ENCODE measurements at regions of chr12 and their contacts with region 1.

Region 1: DNA sequence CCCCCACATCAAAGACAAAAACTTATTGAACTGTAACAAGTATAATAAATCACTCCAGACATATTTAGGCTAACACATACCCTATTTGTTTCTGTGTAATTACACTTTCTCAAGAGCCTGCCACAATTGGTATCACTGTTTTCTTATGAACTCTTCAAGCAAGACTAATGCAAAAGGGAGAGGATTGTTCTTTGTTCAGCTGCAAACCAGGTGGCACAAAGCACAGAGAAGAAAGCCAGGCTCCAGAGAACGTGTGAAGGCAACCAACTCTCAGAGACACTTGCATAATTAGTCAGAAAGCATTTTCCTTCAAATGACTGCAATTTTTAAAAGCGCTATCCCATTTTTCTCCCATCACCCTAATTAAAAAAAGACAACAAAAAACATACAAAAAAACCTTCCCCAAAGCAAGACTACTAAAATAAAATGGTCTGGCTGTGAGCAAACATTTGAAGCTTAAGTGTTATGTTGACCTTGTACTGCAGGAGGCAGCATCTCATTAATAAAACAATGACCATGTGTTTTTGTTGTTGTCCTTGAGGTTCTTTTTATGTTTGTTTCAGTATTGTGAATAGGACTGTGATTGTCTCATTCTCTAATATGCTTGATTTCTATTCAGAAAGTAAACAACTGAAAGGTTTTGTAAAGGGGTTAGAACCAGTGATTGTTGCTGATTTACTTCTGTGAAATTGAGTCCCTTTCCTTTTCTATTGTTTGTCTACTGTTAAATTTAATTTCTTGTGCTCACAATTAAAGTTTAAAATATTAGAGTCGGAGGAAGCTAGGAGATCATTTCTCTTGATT is 452.7 kb upstream of the PDE3A start:
- DNase-seq: peak; percentile 27
- H3K4me3 ChIP-seq: no peak overlapping the region; a peak in 1 of 4 replicates
- H3K27ac ChIP-seq: peak overlapping the region in 1 of 2 experiments; percentile 69; a peak in 2 of 4 replicates
- H3K4me1 ChIP-seq: peaks cover 0 to 10% of the 10 kb centered on the region in 2 experiments; a peak in 2 of 4 replicates
- H3K27me3 ChIP-seq: no peaks in the 10 kb centered on the region
- CTCF ChIP-seq: peak; percentile 84
- EP300 ChIP-seq: no peak
- RAD21 ChIP-seq: peak; percentile 92

Region 2: DNA sequence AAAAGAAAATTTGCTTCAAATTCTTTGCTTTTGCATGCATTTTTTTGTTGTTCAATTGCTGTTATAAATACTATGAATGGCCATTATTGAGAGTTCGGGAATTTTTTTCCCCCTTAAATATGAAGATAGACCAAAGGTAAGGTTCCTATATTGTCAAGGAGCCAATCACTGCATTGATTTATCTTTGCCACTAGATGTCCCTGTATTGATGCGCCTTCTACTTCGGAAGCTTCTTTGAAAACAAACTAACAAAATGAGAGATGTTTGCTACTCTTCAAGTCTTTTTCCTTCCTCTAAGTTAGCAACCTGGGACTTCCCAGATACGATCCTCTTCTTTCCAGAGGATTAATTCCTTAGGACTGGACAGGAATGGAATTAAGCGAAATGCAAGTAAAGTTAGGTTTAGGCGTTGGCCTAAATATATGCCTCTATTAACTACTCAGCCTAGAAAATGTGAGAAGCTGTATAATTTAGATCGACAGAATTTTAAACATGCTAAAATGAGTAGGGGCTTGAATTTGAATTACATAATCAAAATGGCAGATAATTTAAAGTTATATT is 158.2 kb before region 1 on chr12:
- CTCF ChIA-PET with region 1: interaction called, 14 read pairs
- POLR2A ChIA-PET with region 1: no interaction called
- DNase-seq: peak; percentile 31
- H3K4me3 ChIP-seq: no peak overlapping the region
- H3K27ac ChIP-seq: peak overlapping the region in 1 of 2 experiments; percentile 55; a peak in 1 of 4 replicates
- H3K4me1 ChIP-seq: no peaks in the 10 kb centered on the region; a peak in 2 of 4 replicates
- H3K27me3 ChIP-seq: no peaks in the 10 kb centered on the region
- CTCF ChIP-seq: peak; percentile 79
- EP300 ChIP-seq: no peak
- RAD21 ChIP-seq: peak; percentile 87

Region 3: DNA sequence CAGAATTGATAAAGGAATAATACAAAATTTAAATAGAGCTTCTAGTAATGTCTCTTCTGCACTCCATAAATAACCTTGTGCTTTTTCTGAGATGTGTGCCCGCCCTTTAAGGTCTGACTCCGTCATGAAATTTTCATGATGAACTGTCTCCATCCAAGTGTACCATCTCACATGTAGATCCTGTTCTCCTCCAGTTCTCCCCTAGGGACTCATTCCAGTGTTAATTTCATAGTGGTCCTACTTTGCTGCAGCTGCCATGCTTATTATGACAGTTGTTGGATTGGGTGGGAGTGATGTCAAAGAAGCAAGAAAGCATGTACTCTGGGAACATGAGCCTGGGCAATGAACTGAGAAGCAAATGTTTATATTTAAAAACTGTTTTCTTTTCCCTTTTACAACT is 10.2 kb after region 1 on chr12:
- CTCF ChIA-PET with region 1: interaction called, 20 read pairs
- POLR2A ChIA-PET with region 1: no interaction called
- DNase-seq: no peak
- H3K4me3 ChIP-seq: no peak overlapping the region
- H3K27ac ChIP-seq: no peak overlapping the region
- H3K4me1 ChIP-seq: no peaks in the 10 kb centered on the region
- H3K27me3 ChIP-seq: no peaks in the 10 kb centered on the region
- CTCF ChIP-seq: no peak
- EP300 ChIP-seq: no peak
- RAD21 ChIP-seq: no peak

Region 4: GRCh38 chr12:19938031-19938430 is 22.4 kb after region 1 on chr12:
- CTCF ChIA-PET with region 1: interaction called, 11 read pairs
- POLR2A ChIA-PET with region 1: no interaction called
- DNase-seq: no peak
- H3K4me3 ChIP-seq: no peak overlapping the region
- H3K27ac ChIP-seq: no peak overlapping the region
- H3K4me1 ChIP-seq: no peaks in the 10 kb centered on the region
- H3K27me3 ChIP-seq: no peaks in the 10 kb centered on the region
- CTCF ChIP-seq: no peak
- EP300 ChIP-seq: no peak
- RAD21 ChIP-seq: no peak

Region 5: DNA sequence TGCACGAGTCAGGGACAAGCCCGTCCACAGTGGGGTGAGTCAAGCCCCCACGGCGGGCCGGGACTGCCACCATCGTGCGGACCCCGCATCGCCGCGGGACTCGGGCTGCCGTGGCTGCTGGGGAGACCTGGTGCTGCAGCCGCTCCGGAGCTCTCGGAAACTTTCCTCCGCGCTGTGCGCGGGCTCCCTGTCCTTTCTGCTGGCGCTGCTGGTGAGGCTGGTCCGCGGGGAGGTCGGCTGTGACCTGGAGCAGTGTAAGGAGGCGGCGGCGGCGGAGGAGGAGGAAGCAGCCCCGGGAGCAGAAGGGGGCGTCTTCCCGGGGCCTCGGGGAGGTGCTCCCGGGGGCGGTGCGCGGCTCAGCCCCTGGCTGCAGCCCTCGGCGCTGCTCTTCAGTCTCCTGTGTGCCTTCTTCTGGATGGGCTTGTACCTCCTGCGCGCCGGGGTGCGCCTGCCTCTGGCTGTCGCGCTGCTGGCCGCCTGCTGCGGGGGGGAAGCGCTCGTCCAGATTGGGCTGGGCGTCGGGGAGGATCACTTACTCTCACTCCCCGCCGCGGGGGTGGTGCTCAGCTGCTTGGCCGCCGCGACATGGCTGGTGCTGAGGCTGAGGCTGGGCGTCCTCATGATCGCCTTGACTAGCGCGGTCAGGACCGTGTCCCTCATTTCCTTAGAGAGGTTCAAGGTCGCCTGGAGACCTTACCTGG is 453.9 kb after region 1 on chr12:
- CTCF ChIA-PET with region 1: interaction called, 11 read pairs
- POLR2A ChIA-PET with region 1: interaction called, 5 read pairs
- DNase-seq: peak; percentile 74
- H3K4me3 ChIP-seq: peak overlapping the region; percentile 90 to 98
- H3K27ac ChIP-seq: peak overlapping the region; percentile 95 to 96
- H3K4me1 ChIP-seq: peaks cover 0 to 14% of the 10 kb centered on the region in 2 experiments; a peak in 3 of 4 replicates
- H3K27me3 ChIP-seq: no peaks in the 10 kb centered on the region
- CTCF ChIP-seq: peak; percentile 18; the same call in 1 of the 2 replicates
- EP300 ChIP-seq: no peak
- RAD21 ChIP-seq: no peak

Region 6: DNA sequence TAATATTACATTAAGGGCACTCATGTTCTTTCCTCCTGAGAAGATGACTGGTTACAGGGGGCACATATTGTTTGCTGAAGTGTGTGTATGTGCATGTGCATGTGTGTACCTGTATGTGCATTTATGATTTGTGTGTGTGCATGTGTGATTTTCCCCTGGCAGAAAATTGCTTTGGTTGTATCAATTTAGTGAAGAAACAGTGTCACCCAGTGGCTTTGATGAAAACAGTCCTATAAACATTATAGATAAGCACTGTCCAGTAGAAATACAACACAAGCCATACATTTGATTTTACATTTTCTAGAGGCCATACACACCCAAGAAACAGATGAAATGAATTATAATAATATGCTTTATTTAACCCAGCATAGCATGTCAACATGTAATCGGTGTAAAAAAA is 461.4 kb after region 1 on chr12:
- CTCF ChIA-PET with region 1: interaction called, 15 read pairs
- POLR2A ChIA-PET with region 1: no interaction called
- DNase-seq: peak; percentile 14
- H3K4me3 ChIP-seq: no peak overlapping the region
- H3K27ac ChIP-seq: peak overlapping the region in 1 of 2 experiments; percentile 51; a peak in 2 of 4 replicates
- H3K4me1 ChIP-seq: peaks cover 0 to 15% of the 10 kb centered on the region in 2 experiments; a peak in 3 of 4 replicates
- H3K27me3 ChIP-seq: no peaks in the 10 kb centered on the region
- CTCF ChIP-seq: peak; percentile 68
- EP300 ChIP-seq: no peak
- RAD21 ChIP-seq: peak; percentile 80